Astrocyte of the cerebellum (primary cell): ENCODE measurements at regions of chr21 and their contacts with region 1.

Region 1: GRCh38 chr21:36783612-36784383 is 84.9 kb downstream of the SIM2 start:
- DNase-seq: peak; percentile 73
- H3K4me3 ChIP-seq: no peak overlapping the region
- CTCF ChIP-seq: no peak

Region 2: DNA sequence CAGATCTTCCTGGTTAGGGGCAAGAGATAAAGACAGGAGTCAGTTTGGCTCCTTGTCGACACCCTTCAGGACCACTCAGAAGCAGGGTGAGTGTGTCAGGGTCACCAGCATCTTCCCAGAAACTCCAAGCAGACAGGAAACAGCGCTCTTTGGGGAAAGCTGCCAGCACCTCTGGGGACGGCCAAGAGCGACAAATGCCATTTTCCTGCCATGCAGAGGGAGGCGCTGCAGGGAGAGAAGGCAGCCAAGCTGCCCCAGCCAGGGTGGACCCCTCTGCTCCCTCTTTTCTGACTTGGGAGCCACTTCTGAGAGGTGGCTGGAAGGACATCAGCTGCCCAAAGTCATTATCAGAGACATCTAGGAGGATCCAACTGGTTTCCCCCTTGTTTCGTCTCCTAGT is 55.9 kb before region 1 on chr21:
- in situ Hi-C with region 1: loop called (anchors 10 kb)
- DNase-seq: no peak
- H3K4me3 ChIP-seq: no peak overlapping the region
- CTCF ChIP-seq: no peak

Region 3: DNA sequence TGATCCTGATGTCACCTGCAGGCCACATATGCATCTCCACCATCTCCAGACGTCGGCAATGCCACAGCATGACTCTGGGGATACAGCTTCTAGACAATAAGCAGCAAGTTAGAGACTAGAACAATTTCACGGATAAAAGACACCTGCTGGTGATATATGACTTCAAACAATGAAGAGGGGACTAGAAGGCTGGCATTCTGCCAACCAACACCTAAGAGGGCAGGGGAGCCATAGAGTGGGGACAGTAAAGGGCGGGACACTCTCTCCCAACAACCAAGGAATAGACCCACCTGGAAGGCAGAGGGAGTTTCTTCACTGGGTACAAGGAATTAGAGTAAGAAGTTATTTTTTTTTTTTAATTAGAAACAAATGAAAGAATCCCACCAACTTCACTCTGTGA is 41.9 kb after region 1 on chr21:
- in situ Hi-C with region 1: no loop called
- DNase-seq: no peak
- H3K4me3 ChIP-seq: no peak overlapping the region
- CTCF ChIP-seq: no peak